GM10248 (cell line): ENCODE measurements at regions of chr13 and their contacts with region 1.

Region 1: DNA sequence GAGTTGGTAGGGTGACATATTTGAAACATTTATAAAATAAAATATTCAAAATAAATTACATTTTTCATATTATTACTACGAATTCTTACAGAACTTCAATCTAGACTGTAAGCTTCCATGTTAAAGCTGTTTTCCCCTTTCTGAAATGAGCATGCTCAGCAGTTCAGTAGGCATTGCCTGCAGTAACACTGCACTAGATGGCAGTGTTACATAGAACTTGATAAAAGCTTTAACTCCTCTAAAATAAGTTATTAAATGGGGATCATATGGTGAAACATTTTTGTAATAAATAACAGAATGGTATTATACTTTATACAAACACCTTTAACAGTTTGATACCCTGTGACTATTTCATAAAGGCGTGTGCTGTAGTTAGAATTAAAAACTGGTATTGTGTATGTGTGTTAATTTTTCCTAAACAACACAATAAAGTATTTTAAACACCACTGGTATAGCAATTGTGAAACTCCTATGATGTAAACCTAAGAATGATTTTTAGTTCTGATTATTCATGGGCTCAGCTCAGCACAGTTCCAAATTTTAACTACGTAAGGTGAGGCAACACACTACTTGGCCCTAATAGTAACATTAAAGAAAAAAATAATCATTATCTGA is 11.6 kb upstream of the GPR18 start:
- DNase-seq: peak; percentile 37
- CTCF ChIP-seq: peak; percentile 79

Region 2: GRCh38 chr13:99151516-99151915 is 118.2 kb before region 1 on chr13:
- CTCF ChIA-PET with region 1: no interaction called
- POLR2A ChIA-PET with region 1: no interaction called
- DNase-seq: no peak
- CTCF ChIP-seq: no peak

Region 3: DNA sequence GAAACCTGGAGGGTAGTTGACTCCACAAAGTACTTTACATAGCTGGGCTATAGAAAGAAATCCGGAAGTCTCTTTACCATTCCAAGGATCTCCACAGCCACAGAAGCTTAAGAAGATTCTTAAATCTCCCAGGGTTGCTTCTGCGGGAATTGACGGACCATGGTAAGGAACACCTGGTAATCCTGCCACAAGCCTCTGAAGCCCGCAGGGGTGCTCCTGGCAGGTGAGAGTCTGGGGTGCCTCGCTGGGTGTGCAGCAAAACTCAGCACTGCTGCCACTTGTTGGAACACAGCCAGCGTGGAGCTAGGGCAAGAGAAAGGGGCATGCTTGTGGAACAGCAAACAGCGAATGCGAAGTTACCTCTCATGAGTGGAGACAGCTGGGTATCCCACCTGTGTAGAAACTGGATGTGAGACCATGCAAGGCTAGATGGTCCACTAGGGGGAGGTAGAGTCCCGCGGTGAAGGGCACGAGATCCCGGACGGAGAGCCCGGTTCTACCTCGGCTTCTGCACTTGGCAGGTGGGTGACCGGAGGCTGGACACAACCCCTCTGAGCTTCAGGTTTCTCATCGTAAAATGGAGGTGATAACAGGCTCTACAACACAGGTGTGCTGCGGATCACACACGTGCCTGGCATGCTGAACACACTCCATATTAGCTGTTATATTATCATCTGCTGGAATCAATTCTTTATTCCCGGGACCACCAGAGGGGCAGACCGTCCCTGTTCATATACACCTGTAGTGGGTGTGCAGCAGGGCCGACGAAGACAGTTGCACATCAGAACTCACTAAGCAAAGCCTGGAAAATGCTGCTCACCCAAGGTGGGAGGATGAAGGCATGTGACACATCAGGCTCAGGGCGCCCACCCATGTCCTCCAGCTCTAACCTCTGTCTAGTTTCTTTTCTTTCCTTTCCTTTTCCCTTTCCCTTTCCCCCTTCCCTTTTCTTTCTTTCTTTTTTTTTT is 93.1 kb before region 1 on chr13:
- CTCF ChIA-PET with region 1: interaction called, 290 read pairs
- POLR2A ChIA-PET with region 1: no interaction called
- DNase-seq: peak; percentile 86
- CTCF ChIP-seq: peak; percentile 88

Region 4: DNA sequence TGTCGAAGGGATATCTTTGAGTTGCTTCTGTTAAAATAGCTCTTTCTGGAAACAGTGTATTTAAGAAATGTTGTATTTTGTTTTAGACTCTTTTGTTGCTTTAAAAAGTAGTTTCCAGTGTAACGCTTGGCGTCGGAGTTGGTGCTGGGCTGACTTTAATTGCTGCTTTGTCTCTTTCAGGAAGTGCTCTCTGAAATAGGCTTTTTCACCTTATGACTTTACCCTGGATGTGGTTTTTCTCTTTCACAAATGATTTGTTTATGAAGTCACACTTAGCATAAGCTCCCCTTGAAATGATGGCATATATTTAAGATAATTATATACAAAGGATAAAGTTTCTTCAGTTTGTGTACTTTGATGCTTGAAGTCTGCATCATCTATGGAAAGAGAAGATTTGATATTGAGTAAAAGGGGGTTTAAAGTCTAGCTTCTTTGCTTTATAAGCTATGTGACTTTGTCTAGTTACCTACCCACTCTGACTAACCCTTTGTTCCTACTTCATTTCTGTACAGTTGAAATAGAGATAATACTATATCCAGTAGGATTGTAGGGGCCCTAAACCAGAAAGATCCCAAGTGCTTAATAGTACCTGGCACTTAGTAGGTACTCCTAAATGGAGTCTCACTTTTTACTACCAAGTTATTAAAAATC is 11.4 kb before region 1 on chr13 and contains the start of gene GPR18:
- CTCF ChIA-PET with region 1: interaction called, 24 read pairs
- POLR2A ChIA-PET with region 1: no interaction called
- DNase-seq: peak; percentile 56
- CTCF ChIP-seq: no peak

Region 5: DNA sequence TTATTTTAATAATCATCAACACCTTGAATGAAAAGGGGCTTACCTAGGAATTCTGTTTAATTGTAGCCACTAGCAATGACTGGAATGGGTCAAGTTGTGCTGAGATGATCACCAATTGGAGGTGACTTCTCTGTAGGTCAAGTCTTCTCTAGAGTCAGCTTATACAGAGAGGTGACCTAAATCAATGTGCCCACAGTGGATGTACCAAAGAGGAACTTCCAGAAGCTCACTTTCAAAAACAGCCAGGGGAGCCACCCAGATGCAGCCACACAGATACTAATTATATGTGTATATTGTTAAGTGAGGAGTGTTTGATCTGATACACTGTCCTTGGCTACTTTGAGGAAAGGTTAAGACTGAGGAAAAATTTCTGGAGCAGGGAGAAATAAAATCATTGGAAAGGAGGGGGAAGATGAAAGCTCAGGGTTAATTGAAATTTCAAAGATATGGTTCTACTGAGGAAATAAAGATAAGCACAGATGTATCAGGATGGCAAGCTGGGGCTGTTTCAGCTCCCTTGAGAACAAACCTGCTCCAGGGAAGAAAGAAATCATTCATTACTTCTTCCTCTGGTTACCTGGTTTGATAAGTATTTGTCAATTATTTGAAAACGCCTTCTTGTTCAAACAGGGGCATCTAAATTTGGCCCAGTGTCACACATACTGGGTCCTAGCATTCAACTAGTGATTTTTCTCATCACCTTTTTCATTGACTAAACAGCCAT is 32.3 kb after region 1 on chr13:
- CTCF ChIA-PET with region 1: interaction called, 23 read pairs
- POLR2A ChIA-PET with region 1: no interaction called
- DNase-seq: no peak
- CTCF ChIP-seq: no peak

Region 6: DNA sequence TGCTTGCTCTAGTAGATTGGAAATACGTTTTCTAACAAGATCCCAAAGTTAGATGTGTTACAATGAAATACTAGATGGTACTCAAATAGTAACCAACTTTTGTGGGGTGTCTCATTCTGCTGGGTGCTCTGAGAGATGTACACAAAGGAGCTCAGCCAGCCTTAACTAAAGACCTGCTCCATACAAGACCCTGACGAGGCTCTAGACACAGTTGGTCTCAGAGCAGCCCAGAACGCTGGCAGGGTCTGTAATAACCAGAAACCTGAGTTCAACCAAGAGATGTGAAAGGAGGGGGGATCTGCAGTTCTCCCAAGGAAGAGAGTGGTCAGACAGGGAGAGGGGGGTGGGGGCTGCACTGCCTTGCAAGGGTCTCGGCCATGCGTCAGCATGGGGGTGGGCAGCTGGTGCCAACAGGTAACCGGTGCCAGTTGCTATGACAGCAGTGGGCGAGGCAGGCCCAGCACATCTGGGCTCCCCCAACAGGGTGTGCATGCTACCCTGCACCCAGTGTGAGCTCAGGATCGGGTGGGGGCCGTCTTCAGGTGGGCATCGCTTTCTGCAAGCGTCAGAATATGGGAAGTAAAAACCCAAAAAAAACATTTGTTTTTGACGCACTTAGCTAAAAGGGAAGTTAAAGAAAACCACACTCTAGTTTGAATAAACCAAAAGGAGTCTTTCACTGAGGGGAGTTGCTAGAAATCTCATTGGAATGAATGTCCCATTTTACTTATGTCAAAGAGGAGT is 105.4 kb after region 1 on chr13:
- CTCF ChIA-PET with region 1: interaction called, 12 read pairs
- POLR2A ChIA-PET with region 1: no interaction called
- DNase-seq: peak; percentile 57
- CTCF ChIP-seq: no peak

Region 7: DNA sequence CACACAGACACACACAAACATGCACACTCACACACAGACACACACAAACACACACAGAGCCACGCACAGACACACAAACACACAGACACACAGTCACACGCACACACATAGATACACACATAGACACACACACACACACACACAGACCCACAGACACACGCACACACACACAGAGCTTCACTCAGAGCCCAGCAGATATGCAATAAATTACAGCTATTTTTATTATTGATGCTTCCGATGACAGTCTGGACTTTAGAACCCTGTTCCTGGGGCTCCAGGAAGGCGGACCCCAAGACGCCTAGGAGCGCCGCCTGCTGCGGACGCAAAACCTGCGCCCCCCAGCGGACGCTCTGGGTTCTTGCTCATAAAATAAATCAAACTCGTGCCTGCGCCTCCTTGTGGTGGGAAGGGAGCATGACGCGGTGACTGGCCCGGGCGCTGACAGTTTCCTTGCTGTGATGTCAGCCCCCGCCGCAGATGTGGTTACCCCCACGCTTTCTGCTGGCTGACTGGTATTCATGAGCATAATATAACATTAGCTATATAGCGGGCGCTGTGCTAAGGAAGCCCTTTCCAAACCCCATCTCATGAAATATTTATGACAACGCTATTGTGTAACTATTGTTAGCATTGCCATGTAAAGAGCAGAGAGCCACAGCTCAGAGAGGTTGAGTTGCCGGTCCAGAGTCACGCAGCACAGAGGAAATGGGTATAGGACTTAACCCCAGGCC is 167.1 kb after region 1 on chr13:
- CTCF ChIA-PET with region 1: interaction called, 363 read pairs
- POLR2A ChIA-PET with region 1: no interaction called
- DNase-seq: peak; percentile 83
- CTCF ChIP-seq: peak; percentile 100

Region 8: GRCh38 chr13:99782669-99783068 is 512.9 kb after region 1 on chr13:
- CTCF ChIA-PET with region 1: no interaction called
- POLR2A ChIA-PET with region 1: no interaction called
- DNase-seq: no peak
- CTCF ChIP-seq: no peak